ENCODE measurements at regions of chr19 and their contacts with region 1.

Region 1: GRCh38 chr19:46990991-46991676 is 28.5 kb upstream of the NPAS1 start:
- DNase-seq: no peak
- H3K4me3 ChIP-seq: no peak overlapping the region
- CTCF ChIP-seq: peak; percentile 80

Region 2: DNA sequence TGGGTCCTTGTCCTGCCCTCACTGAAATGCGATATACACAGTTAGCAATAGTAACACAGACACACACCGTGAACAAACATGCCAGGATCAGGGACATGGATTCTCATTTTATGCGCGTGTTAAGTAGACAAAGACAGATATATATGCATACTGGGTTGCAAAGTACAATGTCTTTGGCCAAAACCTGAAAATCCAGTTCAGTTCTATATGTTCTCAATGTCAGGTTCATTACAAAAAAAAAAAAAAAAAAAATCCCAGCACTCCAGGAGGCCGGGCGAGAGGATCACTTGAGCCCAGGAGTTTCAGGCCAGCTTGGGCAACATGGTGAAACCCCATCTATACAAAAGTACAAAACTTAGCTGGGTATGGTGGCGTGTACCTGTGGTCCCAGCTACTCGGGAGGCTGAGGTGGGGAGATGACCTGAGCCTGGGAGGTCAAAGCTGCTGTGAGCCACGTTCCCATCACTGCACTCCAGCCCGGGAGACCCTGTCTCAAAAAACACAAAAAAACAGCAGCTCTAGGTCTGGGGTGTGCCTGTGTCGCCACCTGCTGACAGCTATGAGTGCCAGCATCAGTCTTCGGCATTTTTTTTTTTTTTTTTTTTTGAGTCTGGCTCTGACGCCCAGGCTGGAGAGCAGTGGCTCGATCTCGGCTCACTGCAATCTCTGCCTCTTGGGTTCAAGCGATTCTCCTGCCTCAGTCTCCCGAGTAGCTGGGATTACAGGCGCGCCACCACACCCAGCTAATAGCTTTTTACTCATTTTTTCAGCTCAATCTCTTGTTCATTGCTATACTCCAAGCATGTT is 150.8 kb before region 1 on chr19:
- CTCF ChIA-PET with region 1: interaction called, 84 read pairs
- POLR2A ChIA-PET with region 1: interaction called, 3 read pairs
- DNase-seq: peak; percentile 23
- H3K4me3 ChIP-seq: no peak overlapping the region
- CTCF ChIP-seq: peak; percentile 74

Region 3: GRCh38 chr19:46866387-46867152 is 124.6 kb before region 1 on chr19:
- CTCF ChIA-PET with region 1: interaction called, 34 read pairs
- POLR2A ChIA-PET with region 1: no interaction called
- DNase-seq: no peak
- H3K4me3 ChIP-seq: no peak overlapping the region
- CTCF ChIP-seq: no peak

Region 4: GRCh38 chr19:46896076-46896794 is 94.9 kb before region 1 on chr19:
- CTCF ChIA-PET with region 1: interaction called, 10 read pairs
- POLR2A ChIA-PET with region 1: no interaction called
- DNase-seq: no peak
- H3K4me3 ChIP-seq: no peak overlapping the region
- CTCF ChIP-seq: no peak

Region 5: DNA sequence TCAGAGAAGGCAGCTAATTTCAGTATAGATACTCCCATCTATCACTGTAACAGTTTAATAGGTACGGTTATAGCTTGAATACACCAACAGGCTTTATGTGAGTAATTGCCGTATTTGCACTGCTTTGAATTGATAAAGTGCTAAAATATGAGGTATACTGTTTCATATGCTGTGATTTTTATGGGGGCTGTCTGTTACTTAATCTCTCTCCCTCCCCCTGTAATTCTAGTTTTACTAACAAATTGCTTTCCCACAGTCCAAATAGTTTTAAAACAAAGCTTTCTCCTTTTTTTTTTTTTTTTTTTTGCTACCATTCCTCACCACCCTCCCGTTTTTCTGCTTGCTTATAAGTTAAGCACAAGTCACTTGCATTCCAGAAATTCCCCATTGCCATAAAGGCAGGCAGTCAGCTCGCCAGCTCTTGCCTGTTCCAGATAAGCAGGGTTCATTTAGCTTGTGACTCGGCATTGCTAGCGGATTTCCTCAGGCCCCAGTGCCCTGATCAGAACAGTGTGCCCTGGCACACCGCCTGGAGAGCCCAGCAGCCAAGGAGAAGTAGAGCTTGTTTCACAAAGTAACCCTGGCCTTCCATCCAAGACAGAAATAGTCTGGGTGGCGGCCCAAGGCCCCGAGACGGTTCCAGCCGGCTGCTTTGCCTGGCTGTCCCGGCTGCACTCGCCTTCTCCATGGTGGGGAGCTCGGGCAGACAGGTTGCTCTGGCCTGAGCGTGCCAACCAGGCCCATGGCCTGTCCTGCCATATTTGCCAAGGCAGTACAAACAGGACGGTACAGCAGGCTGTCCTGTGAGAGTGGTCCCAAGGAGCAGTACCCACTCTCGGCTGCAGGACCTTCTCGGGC is 15.0 kb before region 1 on chr19:
- CTCF ChIA-PET with region 1: interaction called, 36 read pairs
- POLR2A ChIA-PET with region 1: no interaction called
- DNase-seq: peak; percentile 96
- H3K4me3 ChIP-seq: no peak overlapping the region
- CTCF ChIP-seq: no peak

Region 6: DNA sequence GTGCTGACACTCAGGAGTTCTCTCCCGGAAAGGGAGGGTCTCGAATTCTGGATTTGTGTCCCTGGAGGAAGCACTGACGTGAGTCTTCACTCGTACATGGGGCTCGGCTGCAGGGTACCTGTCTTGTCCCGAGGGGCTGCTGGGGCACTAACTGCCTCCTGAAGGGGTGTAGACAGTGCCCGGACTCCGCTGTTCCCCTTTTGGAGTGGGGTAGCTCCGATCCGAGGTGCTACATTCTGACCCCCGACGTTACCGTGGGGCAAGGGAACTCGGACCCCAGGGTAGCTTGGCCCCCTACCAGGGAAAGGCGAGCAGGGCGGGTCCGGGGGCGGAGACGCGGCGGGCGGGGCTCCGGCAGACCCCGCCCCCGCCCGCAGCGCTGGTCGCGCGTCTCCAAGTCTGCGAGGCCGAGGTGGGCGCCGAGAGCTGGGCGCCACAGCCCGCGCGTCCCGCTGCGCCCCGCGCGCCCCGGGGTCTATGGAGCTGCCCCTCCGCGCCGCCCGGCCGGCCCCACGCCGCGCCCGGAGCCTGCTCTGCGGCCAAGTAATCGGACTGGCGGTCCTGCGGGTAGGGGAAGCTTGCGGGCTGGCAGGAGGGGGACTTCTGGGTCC is 28.4 kb after region 1 on chr19 and contains the start of gene NPAS1:
- CTCF ChIA-PET with region 1: interaction called, 66 read pairs
- POLR2A ChIA-PET with region 1: no interaction called
- DNase-seq: no peak
- H3K4me3 ChIP-seq: peak within 1 kb of the TSS; percentile 52
- CTCF ChIP-seq: no peak

Measured in AG04449 (cell line).